OCI-LY7 (cell line): ENCODE measurements at regions of chrX and their contacts with region 1.

Region 1: GRCh38 chrX:150982788-150983520 is at the start of gene HMGB3:
- DNase-seq: peak; percentile 92
- H3K4me3 ChIP-seq: peak within 1 kb of the TSS; percentile 79
- H3K27ac ChIP-seq: peak within 1 kb of the TSS; percentile 74
- H3K4me1 ChIP-seq: peaks cover 13% of the 10 kb centered on the region
- CTCF ChIP-seq: no peak
- total RNA-seq, gene HMGB3: 28.3 and 53.6 TPM in 2 replicates

Region 2: DNA sequence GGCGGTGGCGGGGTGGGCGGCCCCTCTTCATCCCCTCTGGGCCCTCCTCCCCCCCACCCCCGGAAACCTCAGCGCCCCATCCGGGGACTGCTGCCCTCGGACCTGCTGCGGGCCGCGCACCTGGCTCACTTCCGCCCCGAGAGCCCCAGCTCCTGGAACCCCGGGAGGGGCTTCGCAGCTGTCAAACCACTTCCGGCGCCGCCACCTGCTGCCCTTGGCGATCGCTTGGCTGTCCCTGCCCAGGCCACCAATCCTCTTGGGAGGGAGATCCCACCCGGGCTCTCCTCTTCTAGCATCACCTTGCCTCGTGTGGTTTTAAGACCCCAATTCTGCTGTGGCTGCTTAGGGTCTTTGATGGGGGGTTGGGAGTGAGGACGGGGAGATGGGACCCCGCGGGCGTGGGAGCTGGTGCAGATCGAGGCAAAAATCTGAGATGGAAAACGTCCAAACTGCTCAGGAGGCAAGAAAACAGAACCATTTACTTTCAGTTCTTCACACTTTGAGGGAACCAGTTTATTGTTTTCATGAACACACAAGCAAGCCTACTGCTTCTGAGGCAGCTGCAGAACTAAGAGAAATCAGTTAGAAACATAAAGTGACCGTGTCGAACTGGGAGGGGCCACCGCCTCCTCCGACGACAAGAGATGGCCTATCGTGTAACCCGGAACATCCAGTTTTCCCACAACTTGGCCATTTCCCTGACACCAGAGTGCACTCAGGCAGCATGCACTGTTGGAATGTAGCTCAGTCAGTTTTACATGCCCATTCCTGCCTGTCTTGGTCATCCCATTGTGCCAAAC is 289.0 kb before region 1 on chrX:
- CTCF ChIA-PET with region 1: no interaction called
- POLR2A ChIA-PET with region 1: no interaction called
- intact Hi-C with region 1: loop called (anchors 5 kb)
- DNase-seq: peak; percentile 93
- H3K4me3 ChIP-seq: peak overlapping the region; percentile 75
- H3K27ac ChIP-seq: peak overlapping the region; percentile 99
- H3K4me1 ChIP-seq: peaks cover 70% of the 10 kb centered on the region
- CTCF ChIP-seq: no peak

Region 3: GRCh38 chrX:150772150-150772970 is 210.6 kb before region 1 on chrX:
- CTCF ChIA-PET with region 1: interaction called, 3 read pairs
- POLR2A ChIA-PET with region 1: no interaction called
- intact Hi-C with region 1: loop called (anchors 5 kb)
- DNase-seq: peak; percentile 55
- H3K4me3 ChIP-seq: no peak overlapping the region
- H3K27ac ChIP-seq: no peak overlapping the region
- H3K4me1 ChIP-seq: no peaks in the 10 kb centered on the region
- CTCF ChIP-seq: peak; percentile 75

Region 4: GRCh38 chrX:150898343-150899190 is 84.4 kb before region 1 on chrX and contains the start of gene CD99L2:
- CTCF ChIA-PET with region 1: no interaction called
- POLR2A ChIA-PET with region 1: no interaction called
- intact Hi-C with region 1: loop called (anchors 1 kb)
- DNase-seq: peak; percentile 87
- H3K4me3 ChIP-seq: peak within 1 kb of the TSS; percentile 88
- H3K27ac ChIP-seq: peak within 1 kb of the TSS; percentile 24
- H3K4me1 ChIP-seq: peaks cover 11% of the 10 kb centered on the region
- CTCF ChIP-seq: no peak
- total RNA-seq, gene CD99L2: 5.6 and 5.9 TPM in 2 replicates

Region 5: DNA sequence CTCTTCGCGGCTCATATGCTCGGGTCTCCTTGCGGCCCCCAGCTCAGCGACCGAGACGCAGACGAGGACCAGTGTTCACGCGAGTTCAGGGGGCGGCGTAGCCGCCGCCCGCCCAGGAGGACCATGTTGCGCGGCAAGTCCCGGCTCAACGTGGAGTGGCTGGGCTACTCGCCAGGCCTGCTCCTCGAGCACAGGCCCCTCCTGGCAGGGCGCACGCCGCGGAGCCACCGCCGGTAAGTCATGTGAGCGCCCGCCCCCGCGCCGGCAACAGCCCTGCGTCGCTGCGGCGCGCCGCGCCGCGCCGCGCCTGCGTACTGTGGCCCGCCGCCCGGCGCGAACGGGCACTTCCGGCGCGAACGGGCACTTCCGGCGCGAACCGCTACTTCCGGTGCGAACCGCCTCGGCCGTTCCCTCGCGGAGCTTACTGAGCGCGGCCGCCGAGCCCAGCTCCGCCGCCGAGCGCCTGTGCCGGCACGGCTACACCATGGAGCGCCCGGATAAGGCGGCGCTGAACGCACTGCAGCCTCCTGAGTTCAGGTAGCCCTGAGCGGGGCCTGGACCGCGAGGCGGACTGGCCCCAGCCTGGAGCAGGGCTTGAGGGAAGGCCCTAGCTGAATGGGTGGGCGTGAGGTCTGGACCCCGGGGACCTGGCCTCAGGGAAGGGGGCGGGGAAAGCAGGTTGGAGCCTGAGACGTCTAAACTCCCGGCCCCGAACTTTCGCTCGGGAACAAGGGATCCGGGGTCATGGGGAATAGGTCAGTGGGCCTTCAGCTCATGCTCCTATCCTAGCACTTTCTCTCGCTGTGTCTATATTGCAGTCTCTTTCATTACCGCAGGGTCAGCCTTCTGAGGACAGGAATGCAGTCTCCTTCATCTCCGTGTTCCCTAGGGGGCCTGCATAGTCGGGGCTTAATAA is 414.1 kb after region 1 on chrX and contains the start of gene VMA21:
- CTCF ChIA-PET with region 1: no interaction called
- POLR2A ChIA-PET with region 1: no interaction called
- intact Hi-C with region 1: loop called (anchors 5 kb)
- DNase-seq: peak; percentile 83
- H3K4me3 ChIP-seq: peak within 1 kb of the TSS; percentile 98
- H3K27ac ChIP-seq: peak within 1 kb of the TSS; percentile 93
- H3K4me1 ChIP-seq: peaks cover 35% of the 10 kb centered on the region
- CTCF ChIP-seq: no peak
- total RNA-seq, gene VMA21: 26.1 and 33.7 TPM in 2 replicates